ENCODE measurements at regions of chr14 and their contacts with region 1.

Region 1: GRCh38 chr14:104650057-104650981 is 39.1 kb upstream of the INF2 start:
- DNase-seq: peak; percentile 81
- H3K4me3 ChIP-seq: peak overlapping the region; percentile 13 to 46 (median 43)
- H3K27ac ChIP-seq: no peak overlapping the region
- H3K4me1 ChIP-seq: peaks cover 0 to 10% (median 9%) of the 10 kb centered on the region in 4 donors
- H3K27me3 ChIP-seq: no peaks in the 10 kb centered on the region
- CTCF ChIP-seq: peak; percentile 94 to 99 (median 98)
- EP300 ChIP-seq: no peak
- POLR2A ChIP-seq: no peak

Region 2: GRCh38 chr14:103688906-103689902 is 961.1 kb before region 1 on chr14:
- intact Hi-C with region 1: no loop called
- DNase-seq: no peak
- H3K4me3 ChIP-seq: no peak overlapping the region
- H3K27ac ChIP-seq: peak overlapping the region in 3 of 4 donors; percentile 11 to 15 (median 14)
- H3K4me1 ChIP-seq: peaks cover 0 to 20% (median 3%) of the 10 kb centered on the region in 4 donors
- H3K27me3 ChIP-seq: no peaks in the 10 kb centered on the region
- CTCF ChIP-seq: no peak
- EP300 ChIP-seq: no peak
- POLR2A ChIP-seq: no peak

Region 3: DNA sequence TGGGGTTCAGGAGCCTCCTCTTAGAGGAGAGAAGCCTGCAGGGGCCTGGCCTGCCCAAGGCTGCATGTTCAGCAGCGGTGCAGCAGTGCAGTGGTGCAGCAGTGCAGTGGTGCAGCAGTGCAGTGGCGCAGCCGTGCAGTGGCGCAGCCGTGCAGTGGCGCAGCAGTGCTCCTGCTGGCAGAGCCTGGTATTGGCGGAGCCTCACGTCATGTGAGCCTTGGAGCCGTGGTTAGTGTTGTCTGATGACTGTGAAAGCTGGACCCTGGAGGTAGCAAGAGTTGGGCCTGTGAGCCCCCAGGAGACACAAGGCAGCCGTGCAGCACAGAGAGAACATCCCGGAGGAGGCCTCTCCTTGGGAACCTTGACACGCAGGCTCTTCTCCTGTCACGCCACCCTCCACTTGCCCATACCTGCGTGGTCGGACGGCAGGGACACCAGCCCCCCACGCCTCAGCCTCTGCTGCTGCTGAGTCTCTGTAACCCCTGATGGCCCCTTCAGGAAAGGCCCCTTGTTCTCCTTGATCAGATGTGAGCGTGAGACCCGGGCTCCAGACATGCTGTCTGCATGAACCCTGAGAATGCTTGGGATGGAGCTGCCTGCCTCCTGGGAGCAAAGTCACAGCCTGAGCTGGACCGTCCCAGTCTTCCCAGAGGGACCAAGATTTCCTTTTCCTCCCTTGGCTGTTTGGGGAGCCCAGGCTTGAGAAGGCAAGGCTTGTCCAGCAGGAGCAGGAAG is 318.3 kb before region 1 on chr14:
- intact Hi-C with region 1: no loop called
- DNase-seq: no peak
- H3K4me3 ChIP-seq: no peak overlapping the region
- H3K27ac ChIP-seq: no peak overlapping the region
- H3K4me1 ChIP-seq: no peaks in the 10 kb centered on the region
- H3K27me3 ChIP-seq: peaks cover 0 to 5% (median 0%) of the 10 kb centered on the region in 3 donors
- CTCF ChIP-seq: no peak
- EP300 ChIP-seq: no peak
- POLR2A ChIP-seq: no peak

Region 4: GRCh38 chr14:104677512-104678332 is 27.4 kb after region 1 on chr14:
- intact Hi-C with region 1: loop called (anchors 2 kb)
- DNase-seq: peak; percentile 89
- H3K4me3 ChIP-seq: peak overlapping the region; percentile 31 to 61 (median 55)
- H3K27ac ChIP-seq: peak overlapping the region; percentile 76 to 89 (median 86)
- H3K4me1 ChIP-seq: peaks cover 0 to 61% (median 57%) of the 10 kb centered on the region in 4 donors
- H3K27me3 ChIP-seq: no peaks in the 10 kb centered on the region
- CTCF ChIP-seq: no peak
- EP300 ChIP-seq: peak in 1 of 4 donors; percentile 2
- POLR2A ChIP-seq: peak; percentile 44 to 68

Region 5: DNA sequence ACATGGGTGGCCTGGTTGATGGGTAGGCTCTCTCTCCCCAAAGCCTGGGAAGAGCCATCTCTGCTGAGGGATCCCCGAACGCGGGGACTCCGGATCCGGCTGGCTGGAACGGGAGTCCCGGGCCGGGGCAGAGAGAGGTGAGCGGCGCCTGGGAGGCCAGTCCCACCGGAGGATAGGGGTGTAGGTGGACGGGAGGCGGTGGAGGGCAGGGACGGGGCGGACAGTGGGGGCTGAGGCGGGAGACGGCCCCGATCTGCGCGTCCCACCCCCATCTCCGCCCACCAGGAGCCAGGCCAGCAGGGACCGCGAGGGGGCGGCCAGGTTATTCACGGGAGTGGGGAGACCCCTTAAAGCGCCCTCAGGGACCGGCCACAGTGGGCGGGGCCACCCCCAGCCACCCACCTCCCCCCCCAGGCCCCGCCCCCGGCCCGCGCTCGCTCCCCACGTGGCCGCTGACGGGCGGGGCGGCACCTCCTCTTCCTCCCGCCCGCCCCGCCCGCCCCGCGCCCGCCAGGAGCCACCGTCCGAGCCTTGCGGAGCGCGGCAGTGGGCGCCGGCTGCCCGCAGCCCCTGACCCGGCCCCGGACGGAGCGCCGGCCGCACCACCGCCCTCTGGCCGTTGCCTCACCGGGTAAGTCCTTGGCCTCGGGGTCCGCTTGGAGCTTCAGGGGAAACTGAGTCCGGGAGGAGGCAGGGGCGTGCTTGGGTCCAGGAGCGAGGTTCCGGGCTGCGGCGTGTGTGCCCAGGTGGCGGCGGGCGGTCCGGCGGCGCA is 39.0 kb after region 1 on chr14 and contains the start of gene INF2:
- intact Hi-C with region 1: loop called (anchors 1 kb)
- DNase-seq: no peak
- H3K4me3 ChIP-seq: peak within 1 kb of the TSS; percentile 76 to 100 (median 96)
- H3K27ac ChIP-seq: peak within 1 kb of the TSS; percentile 82 to 90 (median 84)
- H3K4me1 ChIP-seq: peaks cover 0 to 67% (median 65%) of the 10 kb centered on the region in 4 donors
- H3K27me3 ChIP-seq: no peaks in the 10 kb centered on the region
- CTCF ChIP-seq: no peak
- EP300 ChIP-seq: no peak
- POLR2A ChIP-seq: no peak
- total RNA-seq, gene INF2: 26.3 to 67.0 (median 30.3) TPM